Activated naive CD4-positive, alpha-beta T cell treated with anti-CD3 and anti-CD28 coated beads for 36 hours (primary cell): ENCODE measurements at regions of chr1 and their contacts with region 1.

Region 1: GRCh38 chr1:247936415-247936814 is 11.7 kb downstream of the OR2AJ1 start:
- DNase-seq: no peak
- H3K4me3 Mint-ChIP-seq: no peak overlapping the region
- H3K27ac Mint-ChIP-seq: no peak overlapping the region
- H3K4me1 Mint-ChIP-seq: no peaks in the 10 kb centered on the region
- H3K27me3 Mint-ChIP-seq: peaks cover 4% of the 10 kb centered on the region

Region 2: GRCh38 chr1:247833601-247834000 is 102.8 kb before region 1 on chr1:
- CTCF ChIA-PET with region 1: no interaction called
- intact Hi-C with region 1: no loop called
- DNase-seq: no peak
- H3K4me3 Mint-ChIP-seq: no peak overlapping the region
- H3K27ac Mint-ChIP-seq: no peak overlapping the region
- H3K4me1 Mint-ChIP-seq: no peaks in the 10 kb centered on the region
- H3K27me3 Mint-ChIP-seq: peaks cover 8% of the 10 kb centered on the region

Region 3: GRCh38 chr1:247906504-247907047 is 29.8 kb before region 1 on chr1:
- CTCF ChIA-PET with region 1: no interaction called
- intact Hi-C with region 1: loop called (anchors 1 kb)
- DNase-seq: peak; percentile 60
- H3K4me3 Mint-ChIP-seq: peak overlapping the region; percentile 24
- H3K27ac Mint-ChIP-seq: peak overlapping the region; percentile 76
- H3K4me1 Mint-ChIP-seq: peaks cover 31% of the 10 kb centered on the region
- H3K27me3 Mint-ChIP-seq: peaks cover 3% of the 10 kb centered on the region

Region 4: DNA sequence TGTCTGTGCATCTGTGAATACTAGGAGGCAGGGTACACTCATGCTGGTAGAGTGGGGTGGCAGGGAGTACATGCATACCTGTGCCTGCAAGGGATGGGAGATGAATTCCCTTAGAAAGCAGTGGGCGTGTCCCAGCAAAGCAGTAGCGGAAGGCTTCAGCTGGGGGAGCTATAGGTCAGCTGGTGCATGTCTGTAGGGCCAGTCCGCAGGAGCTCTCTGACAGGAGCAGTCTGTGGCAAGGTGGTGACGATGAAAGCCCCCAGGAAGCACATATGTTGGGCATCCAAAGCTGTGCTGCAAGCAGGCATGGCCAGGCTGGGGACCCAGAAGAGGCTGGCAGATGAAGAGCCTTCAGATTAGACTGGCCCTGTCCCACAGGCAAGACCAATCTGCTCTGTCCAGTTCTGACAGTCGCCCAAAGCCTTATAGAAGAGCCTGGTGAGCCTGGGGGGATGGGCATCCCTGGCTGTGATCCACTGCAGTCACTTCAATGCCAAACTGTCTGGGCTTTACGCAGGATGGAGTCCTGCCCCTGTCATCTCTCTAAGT is 293.0 kb after region 1 on chr1:
- CTCF ChIA-PET with region 1: no interaction called
- intact Hi-C with region 1: no loop called
- DNase-seq: no peak
- H3K4me3 Mint-ChIP-seq: no peak overlapping the region
- H3K27ac Mint-ChIP-seq: no peak overlapping the region
- H3K4me1 Mint-ChIP-seq: no peaks in the 10 kb centered on the region
- H3K27me3 Mint-ChIP-seq: peaks cover 11% of the 10 kb centered on the region

Region 5: GRCh38 chr1:248622570-248623001 is 686.2 kb after region 1 on chr1:
- CTCF ChIA-PET with region 1: no interaction called
- intact Hi-C with region 1: loop called (anchors 5 kb)
- DNase-seq: peak; percentile 19
- H3K4me3 Mint-ChIP-seq: no peak overlapping the region
- H3K27ac Mint-ChIP-seq: no peak overlapping the region
- H3K4me1 Mint-ChIP-seq: peaks cover 2% of the 10 kb centered on the region
- H3K27me3 Mint-ChIP-seq: no peaks in the 10 kb centered on the region

Region 6: DNA sequence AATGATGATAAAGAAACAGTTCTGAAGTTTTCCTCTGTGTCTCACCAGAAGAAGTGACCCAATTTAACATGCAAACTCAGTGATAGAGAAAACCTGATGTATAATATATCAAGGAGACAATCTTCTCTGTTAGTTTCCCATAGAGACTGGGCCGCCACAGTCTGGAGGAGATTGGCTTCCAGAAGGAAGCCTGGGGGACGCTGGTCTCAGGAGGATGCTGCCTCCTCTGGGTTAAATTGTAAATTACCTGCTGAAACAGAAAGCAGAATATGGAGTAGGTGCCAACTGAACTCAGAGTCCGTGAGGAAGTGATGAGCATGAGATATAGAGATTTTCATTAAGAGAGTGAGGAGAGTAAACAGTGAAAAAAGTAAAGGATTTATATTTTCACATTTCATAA is 750.4 kb after region 1 on chr1:
- CTCF ChIA-PET with region 1: no interaction called
- intact Hi-C with region 1: loop called (anchors 5 kb)
- DNase-seq: peak; percentile 44
- H3K4me3 Mint-ChIP-seq: no peak overlapping the region
- H3K27ac Mint-ChIP-seq: no peak overlapping the region
- H3K4me1 Mint-ChIP-seq: peaks cover 6% of the 10 kb centered on the region
- H3K27me3 Mint-ChIP-seq: peaks cover 8% of the 10 kb centered on the region